Activated CD4-positive, alpha-beta memory T cell treated with anti-CD3 and anti-CD28 coated beads for 36 hours (primary cell): ENCODE measurements at regions of chr6 and their contacts with region 1.

Region 1: DNA sequence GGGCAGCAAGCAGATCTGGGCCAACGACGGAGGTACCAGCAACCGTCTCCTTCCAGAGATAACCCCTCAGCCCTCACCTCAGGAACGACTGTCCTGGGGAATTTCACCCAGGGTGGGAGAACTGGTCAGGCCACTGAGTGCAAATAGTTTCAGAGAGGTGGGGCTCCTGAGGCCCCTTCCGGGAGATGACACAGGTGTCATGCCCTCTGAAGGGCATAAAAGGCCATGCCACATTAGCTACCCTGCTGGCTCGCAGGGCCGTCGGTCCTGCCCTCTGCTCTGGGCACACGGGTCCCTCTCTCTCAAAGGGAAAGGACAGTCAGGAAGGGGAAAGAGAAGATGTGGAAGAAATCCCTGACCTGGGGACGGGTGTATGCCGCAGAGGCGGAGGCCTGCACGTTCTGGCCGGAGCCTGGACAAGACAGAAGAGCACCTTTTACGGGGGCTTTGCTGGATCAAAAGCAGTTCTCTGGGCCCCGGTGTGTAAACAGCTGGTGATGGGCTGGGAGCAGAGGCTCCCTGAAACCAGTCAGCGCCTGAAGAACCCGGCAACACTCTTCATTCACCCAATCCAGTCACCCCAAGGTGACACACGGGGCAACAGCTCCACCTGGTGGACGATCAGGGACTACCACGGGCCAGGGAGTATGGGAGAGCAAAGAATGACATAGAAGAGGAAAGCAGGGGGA is 6.4 kb upstream of the TAF8 start:
- DNase-seq: peak; percentile 96
- H3K4me3 Mint-ChIP-seq: peak overlapping the region; percentile 68
- H3K27ac Mint-ChIP-seq: peak overlapping the region; percentile 96
- H3K4me1 Mint-ChIP-seq: peaks cover 84% of the 10 kb centered on the region
- H3K27me3 Mint-ChIP-seq: no peaks in the 10 kb centered on the region

Region 2: GRCh38 chr6:41801380-41801779 is 242.6 kb before region 1 on chr6:
- CTCF ChIA-PET with region 1: interaction called, 10 read pairs
- POLR2A ChIA-PET with region 1: no interaction called
- intact Hi-C with region 1: no loop called
- DNase-seq: no peak
- H3K4me3 Mint-ChIP-seq: no peak overlapping the region
- H3K27ac Mint-ChIP-seq: no peak overlapping the region
- H3K4me1 Mint-ChIP-seq: peaks cover 2% of the 10 kb centered on the region
- H3K27me3 Mint-ChIP-seq: no peaks in the 10 kb centered on the region

Region 3: GRCh38 chr6:41901882-41902519 is 141.9 kb before region 1 on chr6:
- CTCF ChIA-PET with region 1: interaction called, 190 read pairs
- POLR2A ChIA-PET with region 1: no interaction called
- intact Hi-C with region 1: loop called (anchors 1 kb)
- DNase-seq: peak; percentile 75
- H3K4me3 Mint-ChIP-seq: no peak overlapping the region
- H3K27ac Mint-ChIP-seq: no peak overlapping the region
- H3K4me1 Mint-ChIP-seq: peaks cover 12% of the 10 kb centered on the region
- H3K27me3 Mint-ChIP-seq: no peaks in the 10 kb centered on the region

Region 4: GRCh38 chr6:41941280-41942066 is 102.5 kb before region 1 on chr6 and contains the start of gene CCND3:
- CTCF ChIA-PET with region 1: interaction called, 470 read pairs
- POLR2A ChIA-PET with region 1: interaction called, 177 read pairs
- intact Hi-C with region 1: loop called (anchors 1 kb)
- DNase-seq: peak; percentile 94
- H3K4me3 Mint-ChIP-seq: peak within 1 kb of the TSS; percentile 99
- H3K27ac Mint-ChIP-seq: peak within 1 kb of the TSS; percentile 94
- H3K4me1 Mint-ChIP-seq: peaks cover 50% of the 10 kb centered on the region
- H3K27me3 Mint-ChIP-seq: no peaks in the 10 kb centered on the region
- total RNA-seq, gene CCND3: 570 to 573 TPM

Region 5: GRCh38 chr6:41976794-41977484 is 67.0 kb before region 1 on chr6:
- CTCF ChIA-PET with region 1: interaction called, 23 read pairs
- POLR2A ChIA-PET with region 1: interaction called, 7 read pairs
- intact Hi-C with region 1: no loop called
- DNase-seq: peak; percentile 64
- H3K4me3 Mint-ChIP-seq: peak overlapping the region; percentile 57
- H3K27ac Mint-ChIP-seq: peak overlapping the region; percentile 94
- H3K4me1 Mint-ChIP-seq: peaks cover 67% of the 10 kb centered on the region
- H3K27me3 Mint-ChIP-seq: no peaks in the 10 kb centered on the region